ENCODE measurements at regions of chr19 and their contacts with region 1.

Region 1: DNA sequence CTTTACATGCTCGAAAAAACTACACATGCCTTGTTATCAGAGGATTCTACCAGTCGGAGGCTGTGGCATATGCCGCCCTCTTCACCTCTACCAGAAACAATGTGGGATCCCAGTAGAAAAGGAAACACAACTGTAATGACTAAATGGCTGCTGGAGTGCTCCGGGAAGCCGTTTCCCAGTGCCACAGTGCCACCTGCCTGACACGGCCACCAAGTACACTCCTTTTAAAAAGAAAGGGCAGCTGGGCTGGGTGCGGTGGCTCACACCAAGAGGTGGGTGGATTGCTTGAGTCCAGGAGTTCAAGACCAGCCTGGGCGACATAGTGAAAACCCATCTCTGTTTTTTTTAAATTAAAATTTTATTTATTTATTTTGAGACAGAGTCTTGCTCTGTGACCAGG is 67.3 kb downstream of the TRPM4 start:
- DNase-seq: peak; percentile 84 to 90
- ATAC-seq: peak; percentile 79 to 89
- H3K4me3 ChIP-seq: no peak overlapping the region
- H3K27ac ChIP-seq: peak overlapping the region in 1 of 2 experiments; percentile 23; a peak in 1 of 6 replicates
- H3K4me1 ChIP-seq: no peaks in the 10 kb centered on the region
- CTCF ChIP-seq: peak; percentile 67
- EP300 ChIP-seq: no peak
- POLR2A ChIP-seq: no peak
- RAD21 ChIP-seq: peak; percentile 78 to 94

Region 2: DNA sequence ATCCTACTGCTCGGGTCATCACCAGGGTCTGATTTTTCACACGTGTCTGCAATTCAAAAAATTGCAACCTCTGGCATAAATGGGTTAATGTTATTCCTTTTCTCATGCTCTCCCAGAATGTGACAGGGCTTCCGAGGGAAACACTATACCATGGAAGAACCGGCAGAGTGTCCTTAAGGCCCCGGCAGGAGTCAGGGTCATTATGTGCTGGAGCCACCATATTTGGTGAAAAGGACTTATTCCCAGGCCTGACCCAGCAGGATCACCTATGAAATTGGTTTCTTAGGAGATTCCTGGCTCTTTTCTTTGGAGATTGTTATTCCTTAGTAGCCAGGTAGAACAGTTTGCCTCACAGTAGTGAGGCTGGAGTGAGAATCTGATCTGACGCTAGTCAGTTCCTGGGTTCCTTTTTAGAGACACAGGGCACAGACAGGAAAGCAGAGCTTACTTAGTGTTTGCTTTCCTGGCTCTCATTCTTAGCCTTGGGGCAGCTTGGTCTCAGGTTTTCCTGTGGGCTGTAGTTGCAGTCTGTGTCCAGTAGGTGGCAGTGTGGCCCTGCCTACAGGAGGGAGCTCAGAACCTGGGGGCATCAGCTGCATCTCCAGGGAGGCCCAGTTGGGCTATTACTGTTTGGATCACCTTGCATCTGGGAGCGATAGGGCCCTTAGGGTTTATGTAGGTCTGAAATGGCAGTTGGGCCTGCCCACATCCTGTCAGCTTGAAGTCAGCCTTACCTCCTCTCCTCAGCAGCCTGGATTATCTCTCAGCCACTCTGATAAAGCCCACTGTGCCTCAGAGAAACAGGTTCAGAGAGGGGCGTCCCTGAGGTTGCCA is 127.2 kb before region 1 on chr19:
- CTCF ChIA-PET with region 1: interaction called, 54 read pairs
- POLR2A ChIA-PET with region 1: no interaction called
- DNase-seq: peak; percentile 88 to 89
- ATAC-seq: peak; percentile 78 to 83
- H3K4me3 ChIP-seq: no peak overlapping the region
- H3K27ac ChIP-seq: peak overlapping the region in 1 of 2 experiments; percentile 46; a peak in 2 of 6 replicates
- H3K4me1 ChIP-seq: peaks cover 21% of the 10 kb centered on the region
- CTCF ChIP-seq: peak; percentile 99
- EP300 ChIP-seq: no peak
- POLR2A ChIP-seq: no peak
- RAD21 ChIP-seq: peak; percentile 88 to 91

Region 3: GRCh38 chr19:49200238-49200862 is 24.5 kb before region 1 on chr19:
- CTCF ChIA-PET with region 1: interaction called, 16 read pairs
- POLR2A ChIA-PET with region 1: no interaction called
- DNase-seq: peak; percentile 58
- ATAC-seq: peak; percentile 64 to 80; a peak in 5 of 6 replicates
- H3K4me3 ChIP-seq: no peak overlapping the region
- H3K27ac ChIP-seq: no peak overlapping the region
- H3K4me1 ChIP-seq: peaks cover 4% of the 10 kb centered on the region; the same call in 1 of the 3 replicates
- CTCF ChIP-seq: no peak
- EP300 ChIP-seq: no peak
- POLR2A ChIP-seq: no peak
- RAD21 ChIP-seq: no peak

Region 4: GRCh38 chr19:49255674-49256073 is 30.8 kb after region 1 on chr19:
- CTCF ChIA-PET with region 1: interaction called, 34 read pairs
- POLR2A ChIA-PET with region 1: no interaction called
- DNase-seq: no peak
- ATAC-seq: peak in 1 of 2 experiments; percentile 32; a peak in 2 of 6 replicates
- H3K4me3 ChIP-seq: no peak overlapping the region
- H3K27ac ChIP-seq: no peak overlapping the region
- H3K4me1 ChIP-seq: no peaks in the 10 kb centered on the region
- CTCF ChIP-seq: no peak
- EP300 ChIP-seq: no peak
- POLR2A ChIP-seq: no peak
- RAD21 ChIP-seq: no peak

Region 5: GRCh38 chr19:49327878-49328544 is 103.2 kb after region 1 on chr19:
- CTCF ChIA-PET with region 1: interaction called, 18 read pairs
- POLR2A ChIA-PET with region 1: no interaction called
- DNase-seq: peak; percentile 51 to 56
- ATAC-seq: peak; percentile 72 to 74; a peak in 4 of 6 replicates
- H3K4me3 ChIP-seq: no peak overlapping the region
- H3K27ac ChIP-seq: no peak overlapping the region
- H3K4me1 ChIP-seq: no peaks in the 10 kb centered on the region
- CTCF ChIP-seq: peak; percentile 70
- EP300 ChIP-seq: no peak
- POLR2A ChIP-seq: no peak
- RAD21 ChIP-seq: peak in 1 of 2 experiments; percentile 35; a peak in 3 of 5 replicates

Region 6: GRCh38 chr19:49436369-49437017 is 211.6 kb after region 1 on chr19:
- CTCF ChIA-PET with region 1: interaction called, 16 read pairs
- POLR2A ChIA-PET with region 1: no interaction called
- DNase-seq: peak in 1 of 2 experiments; percentile 64
- ATAC-seq: peak; percentile 14 to 15; a peak in 3 of 6 replicates
- H3K4me3 ChIP-seq: no peak overlapping the region
- H3K27ac ChIP-seq: no peak overlapping the region
- H3K4me1 ChIP-seq: peaks cover 8% of the 10 kb centered on the region
- CTCF ChIP-seq: no peak
- EP300 ChIP-seq: no peak
- POLR2A ChIP-seq: no peak
- RAD21 ChIP-seq: no peak

Region 7: DNA sequence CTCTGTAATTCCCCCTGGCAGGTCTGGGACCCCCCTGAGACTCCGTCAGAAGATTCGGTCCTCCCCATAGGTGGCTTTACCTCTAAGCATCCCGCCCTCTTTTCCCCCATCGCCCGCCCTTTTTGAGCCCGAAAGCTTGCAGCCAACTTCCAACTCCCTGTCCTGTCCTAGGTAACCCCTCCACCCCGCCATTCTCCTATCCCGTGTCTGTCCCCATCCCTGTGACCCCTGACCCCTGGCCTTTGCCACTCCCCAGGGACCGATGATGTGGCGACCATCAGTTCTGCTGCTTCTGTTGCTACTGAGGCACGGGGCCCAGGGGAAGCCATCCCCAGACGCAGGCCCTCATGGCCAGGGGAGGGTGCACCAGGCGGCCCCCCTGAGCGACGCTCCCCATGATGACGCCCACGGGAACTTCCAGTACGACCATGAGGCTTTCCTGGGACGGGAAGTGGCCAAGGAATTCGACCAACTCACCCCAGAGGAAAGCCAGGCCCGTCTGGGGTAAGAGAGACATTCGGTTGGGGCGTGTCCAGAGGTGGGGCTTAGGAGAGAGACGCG is 303.4 kb after region 1 on chr19:
- CTCF ChIA-PET with region 1: no interaction called
- POLR2A ChIA-PET with region 1: no interaction called
- DNase-seq: no peak
- ATAC-seq: no peak
- H3K4me3 ChIP-seq: peak overlapping the region; percentile 39; the same call in 2 of the 3 replicates
- H3K27ac ChIP-seq: peak overlapping the region in 1 of 2 experiments; percentile 62; a peak in 2 of 6 replicates
- H3K4me1 ChIP-seq: peaks cover 3% of the 10 kb centered on the region; the same call in 1 of the 3 replicates
- CTCF ChIP-seq: no peak
- EP300 ChIP-seq: no peak
- POLR2A ChIP-seq: no peak
- RAD21 ChIP-seq: no peak